Activated naive CD4-positive, alpha-beta T cell treated with anti-CD3 and anti-CD28 coated beads for 36 hours (primary cell): ENCODE measurements at regions of chr19 and their contacts with region 1.

Region 1: GRCh38 chr19:6021878-6022569 is 44.1 kb upstream of the RANBP3 start:
- DNase-seq: peak; percentile 93
- H3K4me3 Mint-ChIP-seq: no peak overlapping the region
- H3K27ac Mint-ChIP-seq: no peak overlapping the region
- H3K4me1 Mint-ChIP-seq: peaks cover 4% of the 10 kb centered on the region
- H3K27me3 Mint-ChIP-seq: no peaks in the 10 kb centered on the region

Region 2: GRCh38 chr19:5772416-5772815 is 249.6 kb before region 1 on chr19:
- CTCF ChIA-PET with region 1: no interaction called
- intact Hi-C with region 1: loop called (anchors 2 kb)
- DNase-seq: no peak
- H3K4me3 Mint-ChIP-seq: no peak overlapping the region
- H3K27ac Mint-ChIP-seq: no peak overlapping the region
- H3K4me1 Mint-ChIP-seq: no peaks in the 10 kb centered on the region
- H3K27me3 Mint-ChIP-seq: no peaks in the 10 kb centered on the region

Region 3: DNA sequence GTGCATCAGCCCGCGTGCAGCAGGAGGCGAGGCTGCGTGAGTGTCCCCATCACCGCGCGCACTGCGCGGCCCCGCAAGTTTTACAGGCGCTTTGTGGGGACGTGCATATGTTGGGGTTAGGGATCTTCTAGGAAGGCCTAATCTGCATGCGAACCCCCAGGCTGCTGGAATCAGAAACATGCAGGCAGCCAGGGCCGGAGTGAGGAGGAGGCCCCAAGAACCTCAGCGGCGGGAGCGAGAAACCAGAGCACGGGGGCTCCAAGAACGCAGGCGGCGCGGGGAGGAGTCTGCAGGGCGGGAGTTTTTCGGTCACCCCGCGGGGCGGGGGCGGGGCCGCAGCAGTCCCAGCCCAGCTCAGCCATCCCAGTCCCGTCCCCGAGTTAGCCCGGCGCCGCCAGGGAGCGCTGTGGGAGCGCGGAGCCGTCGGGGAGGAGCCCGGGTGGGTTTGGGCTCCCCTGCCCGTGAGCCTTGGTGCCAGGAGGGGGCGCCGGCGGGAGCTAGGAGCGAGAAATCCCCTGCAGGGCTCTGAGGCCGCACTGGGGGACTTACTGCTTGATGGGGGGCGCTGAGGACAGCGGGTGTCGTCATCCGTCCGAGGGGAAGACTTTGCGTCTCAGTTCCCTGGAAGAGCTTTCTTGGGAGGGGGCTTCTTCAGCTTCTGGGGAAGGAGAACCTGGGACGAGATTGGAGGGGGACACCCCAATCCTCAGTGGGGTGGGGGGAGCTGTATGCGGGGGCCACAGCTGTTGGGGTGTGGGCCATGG is 218.1 kb before region 1 on chr19:
- CTCF ChIA-PET with region 1: interaction called, 32 read pairs
- intact Hi-C with region 1: loop called (anchors 1 kb)
- DNase-seq: peak; percentile 96
- H3K4me3 Mint-ChIP-seq: peak overlapping the region; percentile 70
- H3K27ac Mint-ChIP-seq: no peak overlapping the region
- H3K4me1 Mint-ChIP-seq: peaks cover 25% of the 10 kb centered on the region
- H3K27me3 Mint-ChIP-seq: peaks cover 19% of the 10 kb centered on the region

Region 4: DNA sequence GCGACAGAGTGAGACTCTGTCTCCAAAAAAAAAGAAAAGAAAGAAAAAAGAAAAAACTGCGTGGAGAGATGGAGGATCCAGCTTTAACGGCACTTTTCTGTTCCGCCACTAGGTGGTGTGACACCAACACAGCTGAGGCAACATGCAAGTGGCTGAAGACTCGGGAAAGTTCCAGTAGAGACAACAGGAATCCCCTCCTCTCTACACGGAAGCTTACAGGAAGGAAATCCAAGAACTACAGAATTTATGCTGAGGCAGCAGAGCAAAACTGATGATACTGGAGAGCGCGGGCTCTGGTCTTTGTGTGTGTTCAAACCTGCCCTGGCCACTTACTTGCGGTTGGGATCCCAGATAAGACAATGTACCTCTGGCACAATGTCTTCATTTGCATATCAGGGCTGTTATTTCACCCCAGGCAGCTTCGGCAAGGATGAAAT is 54.0 kb before region 1 on chr19:
- CTCF ChIA-PET with region 1: interaction called, 16 read pairs
- intact Hi-C with region 1: loop called (anchors 1 kb)
- DNase-seq: peak; percentile 86
- H3K4me3 Mint-ChIP-seq: peak overlapping the region; percentile 1
- H3K27ac Mint-ChIP-seq: peak overlapping the region; percentile 80
- H3K4me1 Mint-ChIP-seq: peaks cover 87% of the 10 kb centered on the region
- H3K27me3 Mint-ChIP-seq: no peaks in the 10 kb centered on the region

Region 5: GRCh38 chr19:5977785-5978605 is 44.0 kb before region 1 on chr19 and contains the start of gene RANBP3:
- CTCF ChIA-PET with region 1: interaction called, 14 read pairs
- intact Hi-C with region 1: no loop called
- DNase-seq: peak; percentile 98
- H3K4me3 Mint-ChIP-seq: peak within 1 kb of the TSS; percentile 98
- H3K27ac Mint-ChIP-seq: peak within 1 kb of the TSS; percentile 95
- H3K4me1 Mint-ChIP-seq: peaks cover 59% of the 10 kb centered on the region
- H3K27me3 Mint-ChIP-seq: no peaks in the 10 kb centered on the region
- total RNA-seq, gene RANBP3: 77.9 to 80.5 TPM

Region 6: GRCh38 chr19:5987077-5987818 is 34.8 kb before region 1 on chr19:
- CTCF ChIA-PET with region 1: interaction called, 14 read pairs
- intact Hi-C with region 1: loop called (anchors 1 kb)
- DNase-seq: peak; percentile 84
- H3K4me3 Mint-ChIP-seq: peak overlapping the region; percentile 48
- H3K27ac Mint-ChIP-seq: no peak overlapping the region
- H3K4me1 Mint-ChIP-seq: peaks cover 24% of the 10 kb centered on the region
- H3K27me3 Mint-ChIP-seq: no peaks in the 10 kb centered on the region

Region 7: GRCh38 chr19:6032827-6033226 is 10.8 kb after region 1 on chr19:
- CTCF ChIA-PET with region 1: interaction called, 11 read pairs
- intact Hi-C with region 1: no loop called
- DNase-seq: no peak
- H3K4me3 Mint-ChIP-seq: no peak overlapping the region
- H3K27ac Mint-ChIP-seq: no peak overlapping the region
- H3K4me1 Mint-ChIP-seq: no peaks in the 10 kb centered on the region
- H3K27me3 Mint-ChIP-seq: no peaks in the 10 kb centered on the region